ENCODE measurements at regions of chr18 and their contacts with region 1.

Region 1: DNA sequence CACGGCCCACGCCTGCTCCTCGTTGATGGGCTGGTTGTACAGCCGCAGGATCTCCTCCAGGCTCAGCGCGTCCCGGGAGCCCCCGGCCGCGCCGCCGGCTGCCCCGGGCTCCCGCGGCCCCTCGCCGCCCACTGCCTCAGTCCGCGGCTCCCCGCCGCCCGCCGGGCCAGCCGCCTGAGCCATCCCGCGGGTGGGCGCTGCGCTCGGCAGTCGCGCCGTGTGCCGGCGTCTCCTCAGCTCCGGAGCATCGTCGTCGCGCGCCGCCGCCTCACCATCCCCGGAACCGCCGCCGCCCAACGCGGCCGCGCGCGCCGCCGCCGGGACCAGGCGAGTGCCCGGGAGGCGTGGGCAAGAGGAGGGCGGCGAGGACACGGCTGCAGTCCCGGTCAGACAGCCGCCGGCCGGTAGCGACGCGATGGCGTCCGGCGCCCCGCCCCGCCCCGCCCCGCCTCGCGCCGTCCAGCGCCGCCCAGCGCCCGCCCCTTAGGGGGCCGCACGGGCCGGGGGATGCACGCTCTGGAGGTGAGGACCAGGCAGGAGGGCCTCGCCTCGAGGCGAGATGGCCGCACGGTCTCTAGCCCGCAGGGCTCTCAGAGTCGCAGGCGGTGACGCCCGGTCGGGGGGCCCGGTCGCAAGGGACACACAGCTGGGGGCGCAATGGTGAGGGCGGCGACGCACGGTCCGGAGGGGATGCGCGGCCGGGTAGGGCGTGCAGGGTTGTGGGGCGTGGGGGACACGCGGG is at the start of gene SPIRE1:
- DNase-seq: peak; percentile 83 to 91
- ATAC-seq: peak; percentile 90
- H3K4me3 ChIP-seq: peak within 1 kb of the TSS; percentile 84 to 97
- H3K27ac ChIP-seq: peak within 1 kb of the TSS; percentile 84 to 97
- H3K4me1 ChIP-seq: no peaks in the 10 kb centered on the region
- H3K27me3 ChIP-seq: no peaks in the 10 kb centered on the region
- total RNA-seq, gene SPIRE1: 41.4 to 48.5 TPM

Region 2: GRCh38 chr18:12391618-12392165 is 266.2 kb before region 1 on chr18:
- intact Hi-C with region 1: loop called (anchors 1 to 2 kb)
- DNase-seq: peak; percentile 64 to 81
- ATAC-seq: peak; percentile 92
- H3K4me3 ChIP-seq: no peak overlapping the region
- H3K27ac ChIP-seq: no peak overlapping the region
- H3K4me1 ChIP-seq: no peaks in the 10 kb centered on the region
- H3K27me3 ChIP-seq: no peaks in the 10 kb centered on the region

Region 3: GRCh38 chr18:12534820-12535219 is 123.0 kb before region 1 on chr18:
- intact Hi-C with region 1: loop called in 1 of 2 experiments (anchors 5 kb)
- DNase-seq: no peak
- ATAC-seq: no peak
- H3K4me3 ChIP-seq: no peak overlapping the region
- H3K27ac ChIP-seq: no peak overlapping the region
- H3K4me1 ChIP-seq: no peaks in the 10 kb centered on the region
- H3K27me3 ChIP-seq: no peaks in the 10 kb centered on the region

Region 4: DNA sequence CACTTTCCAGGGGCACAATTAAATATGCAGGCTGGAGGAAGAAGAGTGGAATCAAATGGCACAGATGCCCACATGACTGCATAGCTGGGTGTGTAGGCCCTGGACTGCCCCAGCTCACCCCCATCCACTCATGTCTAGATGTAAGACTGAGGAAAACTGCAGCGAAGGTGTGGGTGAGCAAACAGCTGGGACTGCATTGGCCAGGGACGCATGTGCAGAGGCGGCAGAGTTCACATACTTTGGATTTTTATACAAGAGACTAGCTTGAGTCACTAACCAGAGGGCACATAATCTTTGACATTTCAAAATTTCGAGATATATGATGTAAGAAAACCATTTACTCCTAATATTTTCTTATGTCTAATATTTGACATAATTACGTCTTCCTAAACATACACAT is 60.1 kb before region 1 on chr18:
- intact Hi-C with region 1: loop called in 1 of 2 experiments (anchors 10 kb)
- DNase-seq: peak in 1 of 2 donors; percentile 59
- ATAC-seq: no peak
- H3K4me3 ChIP-seq: no peak overlapping the region
- H3K27ac ChIP-seq: peak overlapping the region in 1 of 2 donors; percentile 31
- H3K4me1 ChIP-seq: peaks cover 2 to 7% of the 10 kb centered on the region in 2 donors
- H3K27me3 ChIP-seq: no peaks in the 10 kb centered on the region

Measured in aorta (tissue), 5 donors.